Colonic mucosa (tissue), 4 donors: ENCODE measurements at regions of chr12 and their contacts with region 1.

Region 1: DNA sequence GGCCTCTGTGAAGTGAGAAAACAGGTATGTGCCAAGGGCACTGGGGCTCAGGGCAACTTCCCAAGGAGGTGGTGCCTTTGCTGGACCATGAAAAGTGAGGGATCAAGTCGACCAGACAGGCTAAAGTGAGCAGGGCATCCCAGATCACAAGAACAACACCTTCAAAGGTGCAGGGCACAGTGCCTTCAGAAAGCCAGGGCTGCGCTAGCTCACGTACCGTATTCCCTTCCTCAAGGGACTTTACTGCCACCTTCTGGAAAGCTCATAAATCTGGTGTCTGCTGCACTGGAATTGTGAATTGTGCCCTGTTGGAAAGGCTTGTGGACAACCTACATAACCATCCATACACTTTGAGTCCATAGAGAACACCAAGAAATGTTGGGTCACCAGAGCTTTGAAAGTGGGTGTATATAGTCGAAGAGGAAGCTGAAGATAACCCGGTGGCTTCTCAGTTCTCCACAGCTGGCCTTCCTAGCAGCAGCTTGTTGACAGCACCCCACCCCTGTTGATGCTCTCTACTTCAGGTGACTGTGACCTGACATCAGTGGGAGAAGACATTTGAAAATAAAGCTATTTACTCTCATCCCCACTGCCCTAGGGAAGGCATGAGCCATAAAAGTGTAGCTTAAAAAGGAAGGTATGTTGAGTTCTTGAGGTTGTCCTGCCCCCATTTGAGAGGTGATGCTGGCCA is 24.5 kb downstream of the FIGNL2 start:
- DNase-seq: peak; percentile 57
- H3K4me3 ChIP-seq: no peak overlapping the region
- H3K27ac ChIP-seq: no peak overlapping the region
- H3K4me1 ChIP-seq: peaks cover 8% of the 10 kb centered on the region
- H3K27me3 ChIP-seq: no peaks in the 10 kb centered on the region
- CTCF ChIP-seq: peak; percentile 41

Region 2: DNA sequence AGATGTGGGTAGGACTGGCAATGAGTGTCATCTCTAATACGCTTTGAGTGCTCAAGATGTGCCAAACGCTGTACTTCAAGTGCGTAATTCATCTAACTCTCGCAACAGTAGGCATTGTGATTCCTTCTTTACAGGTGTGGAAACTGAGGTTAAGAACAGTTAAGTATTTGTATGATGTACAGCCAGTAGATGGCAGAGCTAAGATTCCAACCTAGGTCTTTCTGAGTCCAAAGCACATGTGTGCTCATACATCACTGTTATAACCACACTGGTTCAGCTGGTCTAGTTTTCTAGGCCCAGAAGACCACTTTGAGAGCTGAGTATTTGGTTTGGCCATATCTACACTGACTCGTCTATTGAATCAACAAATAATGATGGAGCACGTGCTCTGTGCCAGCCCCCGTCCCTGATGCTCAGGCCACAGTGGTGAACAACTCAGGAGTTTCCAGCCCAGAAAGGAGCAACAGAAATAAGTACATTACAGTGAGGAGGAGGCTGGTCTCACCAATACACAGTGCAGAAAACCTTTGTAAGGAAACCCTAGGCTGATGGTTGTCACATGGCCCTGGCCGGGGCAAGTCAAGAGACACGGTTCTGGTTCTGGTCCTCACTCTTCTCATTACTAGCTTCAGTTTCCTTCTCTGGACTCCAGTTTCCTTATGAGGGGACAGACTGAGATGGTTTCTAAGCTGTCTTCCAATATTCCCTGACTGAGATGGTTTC is 302.3 kb before region 1 on chr12:
- intact Hi-C with region 1: loop called (anchors 5 kb)
- DNase-seq: no peak
- H3K4me3 ChIP-seq: no peak overlapping the region
- H3K27ac ChIP-seq: no peak overlapping the region
- H3K4me1 ChIP-seq: no peaks in the 10 kb centered on the region
- H3K27me3 ChIP-seq: no peaks in the 10 kb centered on the region
- CTCF ChIP-seq: no peak

Region 3: GRCh38 chr12:51871126-51871525 is 47.1 kb after region 1 on chr12:
- intact Hi-C with region 1: loop called (anchors 5 kb)
- DNase-seq: no peak
- H3K4me3 ChIP-seq: no peak overlapping the region
- H3K27ac ChIP-seq: no peak overlapping the region
- H3K4me1 ChIP-seq: no peaks in the 10 kb centered on the region
- H3K27me3 ChIP-seq: peaks cover 12% of the 10 kb centered on the region
- CTCF ChIP-seq: no peak